WTC11 (cell line): ENCODE measurements at regions of chr20 and their contacts with region 1.

Region 1: GRCh38 chr20:62707921-62708521 is 615 bp upstream of the NTSR1 start:
- DNase-seq: peak; percentile 83
- ATAC-seq: peak; percentile 82
- H3K4me3 Mint-ChIP-seq: peak overlapping the region; percentile 77
- H3K27ac Mint-ChIP-seq: no peak overlapping the region
- H3K4me1 Mint-ChIP-seq: 0 out of 2 replicates have a peak, but pooled peaks cover 3% of the 10 kb centered on the region
- H3K27me3 Mint-ChIP-seq: peaks cover 32% of the 10 kb centered on the region
- CTCF ChIP-seq: peak; percentile 53; the same call in 1 of the 2 replicates

Region 2: DNA sequence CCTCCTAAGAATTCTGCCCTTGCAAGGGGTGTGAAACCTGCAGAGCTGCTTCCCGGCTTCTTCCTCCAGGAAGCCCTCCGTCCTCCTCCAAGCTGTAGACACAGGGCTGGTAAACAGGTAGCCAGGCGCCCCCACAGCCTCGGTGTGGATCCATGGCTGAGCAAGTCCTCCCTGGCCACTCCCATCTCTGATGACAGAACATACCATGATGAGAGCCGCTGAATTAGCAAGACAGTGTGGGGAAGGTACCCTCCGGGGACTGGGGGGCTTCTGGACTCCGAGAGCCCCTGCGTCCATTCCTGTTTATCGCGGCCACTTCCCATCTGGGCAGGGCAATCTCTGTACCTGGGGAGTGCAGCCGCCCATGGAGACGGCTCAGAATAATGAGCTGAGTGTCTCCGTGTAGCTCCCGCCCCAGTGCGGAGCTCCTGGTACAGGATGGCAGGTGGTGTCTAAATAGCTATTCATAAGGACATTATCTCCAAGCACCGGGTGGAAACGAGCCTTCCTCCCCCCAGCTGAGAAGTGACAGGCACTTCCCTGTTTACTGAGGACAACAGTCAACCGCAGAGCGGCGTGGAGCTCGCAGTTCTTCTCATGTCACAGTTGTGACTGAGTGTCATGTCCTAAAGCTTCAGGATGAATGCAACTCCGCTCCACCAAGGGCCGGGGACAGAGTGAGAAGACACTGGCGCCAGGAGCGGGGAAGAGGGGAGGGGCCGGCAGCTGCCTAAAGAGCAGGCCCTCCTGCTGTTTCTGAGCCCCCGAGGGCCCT is 22.1 kb before region 1 on chr20:
- CTCF ChIA-PET with region 1: interaction called, 13 read pairs
- POLR2A ChIA-PET with region 1: no interaction called
- DNase-seq: no peak
- ATAC-seq: no peak; the same call in none of the 2 replicates
- H3K4me3 Mint-ChIP-seq: no peak overlapping the region
- H3K27ac Mint-ChIP-seq: peak overlapping the region; percentile 50; the same call in 1 of the 2 replicates
- H3K4me1 Mint-ChIP-seq: peaks cover 6% of the 10 kb centered on the region; the same call in 1 of the 2 replicates
- H3K27me3 Mint-ChIP-seq: peaks cover under 1% of the 10 kb centered on the region; the same call in 1 of the 2 replicates
- CTCF ChIP-seq: no peak

Region 3: GRCh38 chr20:62723351-62723750 is 15.3 kb after region 1 on chr20:
- CTCF ChIA-PET with region 1: interaction called, 16 read pairs
- POLR2A ChIA-PET with region 1: no interaction called
- DNase-seq: no peak
- ATAC-seq: no peak
- H3K4me3 Mint-ChIP-seq: no peak overlapping the region
- H3K27ac Mint-ChIP-seq: no peak overlapping the region
- H3K4me1 Mint-ChIP-seq: no peaks in the 10 kb centered on the region
- H3K27me3 Mint-ChIP-seq: peaks cover 12% of the 10 kb centered on the region
- CTCF ChIP-seq: no peak

Region 4: GRCh38 chr20:62782149-62782892 is 74.3 kb after region 1 on chr20:
- CTCF ChIA-PET with region 1: interaction called, 22 read pairs
- POLR2A ChIA-PET with region 1: no interaction called
- DNase-seq: peak; percentile 55
- ATAC-seq: peak; percentile 37
- H3K4me3 Mint-ChIP-seq: no peak overlapping the region
- H3K27ac Mint-ChIP-seq: no peak overlapping the region; the same call in 1 of the 2 replicates
- H3K4me1 Mint-ChIP-seq: peaks cover 4% of the 10 kb centered on the region
- H3K27me3 Mint-ChIP-seq: no peaks in the 10 kb centered on the region
- CTCF ChIP-seq: no peak

Region 5: DNA sequence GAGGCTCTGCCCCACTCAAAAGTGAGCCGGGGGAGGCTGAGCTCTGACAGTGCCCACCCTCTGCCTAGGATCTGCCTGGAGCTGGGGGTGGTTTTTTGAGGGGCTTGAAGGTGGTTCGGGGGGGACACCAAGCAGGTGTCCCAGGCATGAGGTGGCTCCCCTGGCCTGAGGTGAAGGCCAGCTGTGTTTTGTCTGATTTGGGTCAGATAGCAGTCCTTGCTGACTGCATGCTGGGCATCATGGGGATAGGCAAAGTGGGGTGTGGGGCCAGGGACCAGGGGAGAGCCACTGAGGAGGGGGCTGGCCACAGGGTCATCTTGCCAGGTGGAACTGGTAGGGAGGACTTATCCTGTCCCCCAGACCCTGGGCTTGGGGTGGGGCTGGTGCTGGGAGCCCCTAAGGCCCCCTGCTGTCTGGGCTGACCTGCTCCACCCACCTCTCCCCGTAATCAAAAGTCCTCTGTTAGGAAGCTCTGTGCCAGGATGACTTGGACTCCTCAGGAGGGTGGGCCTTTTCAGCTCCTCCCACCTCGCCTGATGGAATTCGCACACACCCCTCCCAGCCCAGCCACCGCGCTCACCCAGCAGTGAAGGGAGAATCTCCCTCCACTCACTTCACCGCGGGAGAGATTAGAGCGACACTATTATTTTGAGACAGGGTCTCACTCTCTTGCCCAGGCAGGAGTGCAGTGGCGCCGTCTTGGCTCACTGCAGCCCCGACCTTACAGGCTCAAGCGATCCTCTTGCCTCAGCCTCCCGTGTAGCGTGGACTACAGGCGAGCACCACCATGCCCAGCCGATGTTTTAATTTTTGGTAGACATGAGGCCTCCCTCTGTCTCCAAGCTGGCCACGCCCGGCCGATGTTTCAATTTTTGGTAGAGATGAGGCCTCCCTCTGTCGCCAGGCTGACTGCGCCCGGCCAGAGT is 107.3 kb after region 1 on chr20:
- CTCF ChIA-PET with region 1: interaction called, 13 read pairs
- POLR2A ChIA-PET with region 1: no interaction called
- DNase-seq: peak; percentile 65
- ATAC-seq: peak; percentile 71
- H3K4me3 Mint-ChIP-seq: peak overlapping the region; percentile 65
- H3K27ac Mint-ChIP-seq: peak overlapping the region; percentile 76
- H3K4me1 Mint-ChIP-seq: peaks cover 14% of the 10 kb centered on the region
- H3K27me3 Mint-ChIP-seq: no peaks in the 10 kb centered on the region; the same call in 1 of the 2 replicates
- CTCF ChIP-seq: no peak